CD8-positive, alpha-beta T cell (primary cell): ENCODE measurements at regions of chr10 and their contacts with region 1.

Region 1: GRCh38 chr10:100174699-100175677 is 10.8 kb downstream of the ERLIN1 start:
- DNase-seq: no peak
- ATAC-seq: no peak
- H3K4me3 ChIP-seq: no peak overlapping the region
- H3K4me3 Mint-ChIP-seq: no peak overlapping the region
- H3K27ac ChIP-seq: no peak overlapping the region
- H3K27ac Mint-ChIP-seq: peak overlapping the region; percentile 56
- H3K4me1 ChIP-seq: no peaks in the 10 kb centered on the region
- H3K4me1 Mint-ChIP-seq: peaks cover 24% of the 10 kb centered on the region
- H3K27me3 ChIP-seq: no peaks in the 10 kb centered on the region
- H3K27me3 Mint-ChIP-seq: no peaks in the 10 kb centered on the region
- CTCF ChIP-seq: no peak

Region 2: DNA sequence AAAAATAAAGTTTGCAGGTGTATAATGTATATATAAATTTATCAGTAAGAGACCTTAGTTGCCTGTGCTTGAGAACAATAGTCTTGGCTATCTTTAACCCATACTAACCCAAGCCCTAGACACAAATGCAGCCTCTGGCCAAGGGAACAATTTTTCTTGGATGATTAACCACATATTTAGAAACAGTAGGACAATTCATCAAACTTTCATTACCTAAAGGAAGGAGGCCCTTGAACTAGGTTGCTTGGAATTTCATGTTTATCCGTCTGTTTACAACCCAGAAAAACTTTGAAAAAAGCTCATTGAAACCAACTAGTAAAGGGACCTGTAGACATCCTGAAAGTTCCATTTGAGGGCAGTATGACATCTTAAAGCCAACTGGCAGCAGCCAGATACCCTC is 19.7 kb after region 1 on chr10:
- CTCF ChIA-PET with region 1: no interaction called
- POLR2A ChIA-PET with region 1: no interaction called
- intact Hi-C with region 1: loop called in 1 of 2 experiments (anchors 1 kb)
- DNase-seq: no peak
- ATAC-seq: no peak
- H3K4me3 ChIP-seq: no peak overlapping the region
- H3K4me3 Mint-ChIP-seq: no peak overlapping the region
- H3K27ac ChIP-seq: no peak overlapping the region
- H3K27ac Mint-ChIP-seq: no peak overlapping the region
- H3K4me1 ChIP-seq: no peaks in the 10 kb centered on the region
- H3K4me1 Mint-ChIP-seq: peaks cover 9% of the 10 kb centered on the region
- H3K27me3 ChIP-seq: no peaks in the 10 kb centered on the region
- H3K27me3 Mint-ChIP-seq: no peaks in the 10 kb centered on the region
- CTCF ChIP-seq: no peak